Naive thymus-derived CD4-positive, alpha-beta T cell (primary cell): ENCODE measurements at regions of chr10 and their contacts with region 1.

Region 1: GRCh38 chr10:72273410-72274212 is at the start of gene DDIT4:
- DNase-seq: peak; percentile 92 to 98 (median 97)
- ATAC-seq: peak; percentile 97
- H3K4me3 ChIP-seq: peak within 1 kb of the TSS; percentile 95
- H3K4me3 Mint-ChIP-seq: peak within 1 kb of the TSS; percentile 97 to 100 (median 99)
- H3K27ac ChIP-seq: peak within 1 kb of the TSS; percentile 96
- H3K27ac Mint-ChIP-seq: peak within 1 kb of the TSS; percentile 93 to 98 (median 95)
- H3K4me1 ChIP-seq: peaks cover 9 to 20% of the 10 kb centered on the region in 2 donors
- H3K4me1 Mint-ChIP-seq: peaks cover 34 to 63% (median 59%) of the 10 kb centered on the region in 7 donors
- H3K27me3 ChIP-seq: no peaks in the 10 kb centered on the region
- H3K27me3 Mint-ChIP-seq: no peaks in the 10 kb centered on the region
- total RNA-seq, gene DDIT4: 25.4 to 335 (median 135) TPM

Region 2: DNA sequence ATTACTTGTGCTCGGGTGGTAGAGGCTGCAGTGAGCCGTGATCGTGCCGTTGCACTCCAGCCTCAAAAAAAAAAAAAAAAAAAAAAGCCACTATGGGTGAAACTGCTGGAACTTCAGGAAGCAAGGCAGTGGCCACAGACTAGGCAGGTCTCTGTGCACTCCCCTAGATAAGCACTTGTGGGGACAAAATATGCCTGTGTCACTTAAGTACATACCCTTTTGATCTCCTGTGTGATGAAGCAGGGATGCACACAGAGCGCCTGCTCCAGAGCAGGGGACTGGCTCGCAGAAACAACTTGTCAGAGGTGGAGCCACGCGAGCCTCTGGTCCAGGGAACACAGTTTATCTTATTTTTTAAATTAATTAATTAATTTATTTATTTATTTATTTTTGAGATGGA is 379.7 kb before region 1 on chr10:
- CTCF ChIA-PET with region 1: no interaction called
- POLR2A ChIA-PET with region 1: no interaction called
- intact Hi-C with region 1: loop called in 1 of 2 experiments (anchors 1 kb)
- DNase-seq: no peak
- ATAC-seq: no peak
- H3K4me3 ChIP-seq: no peak overlapping the region
- H3K4me3 Mint-ChIP-seq: no peak overlapping the region
- H3K27ac ChIP-seq: no peak overlapping the region
- H3K27ac Mint-ChIP-seq: peak overlapping the region in 1 of 9 donors; percentile 78
- H3K4me1 ChIP-seq: peaks cover 0 to 11% of the 10 kb centered on the region in 2 donors
- H3K4me1 Mint-ChIP-seq: peaks cover 5 to 22% (median 11%) of the 10 kb centered on the region in 7 donors
- H3K27me3 ChIP-seq: no peaks in the 10 kb centered on the region
- H3K27me3 Mint-ChIP-seq: peaks cover 0 to 7% (median 0%) of the 10 kb centered on the region in 5 donors

Region 3: GRCh38 chr10:72234560-72235095 is 39.0 kb before region 1 on chr10:
- CTCF ChIA-PET with region 1: interaction called, 3 read pairs
- POLR2A ChIA-PET with region 1: interaction called, 13 read pairs
- intact Hi-C with region 1: no loop called
- DNase-seq: no peak
- ATAC-seq: no peak
- H3K4me3 ChIP-seq: no peak overlapping the region
- H3K4me3 Mint-ChIP-seq: no peak overlapping the region
- H3K27ac ChIP-seq: no peak overlapping the region
- H3K27ac Mint-ChIP-seq: no peak overlapping the region
- H3K4me1 ChIP-seq: peaks cover 0 to 12% of the 10 kb centered on the region in 2 donors
- H3K4me1 Mint-ChIP-seq: peaks cover 8 to 34% (median 20%) of the 10 kb centered on the region in 7 donors
- H3K27me3 ChIP-seq: no peaks in the 10 kb centered on the region
- H3K27me3 Mint-ChIP-seq: no peaks in the 10 kb centered on the region

Region 4: GRCh38 chr10:72285972-72286521 is 12.4 kb after region 1 on chr10:
- CTCF ChIA-PET with region 1: interaction called, 33 read pairs
- POLR2A ChIA-PET with region 1: interaction called, 26 read pairs
- intact Hi-C with region 1: loop called (anchors 1 kb)
- DNase-seq: no peak
- ATAC-seq: no peak
- H3K4me3 ChIP-seq: no peak overlapping the region
- H3K4me3 Mint-ChIP-seq: peak overlapping the region in 5 of 10 donors; percentile 25 to 72 (median 63)
- H3K27ac ChIP-seq: peak overlapping the region; percentile 35
- H3K27ac Mint-ChIP-seq: peak overlapping the region; percentile 27 to 91 (median 81)
- H3K4me1 ChIP-seq: peaks cover 12 to 27% of the 10 kb centered on the region in 2 donors
- H3K4me1 Mint-ChIP-seq: peaks cover 24 to 50% (median 42%) of the 10 kb centered on the region in 7 donors
- H3K27me3 ChIP-seq: no peaks in the 10 kb centered on the region
- H3K27me3 Mint-ChIP-seq: no peaks in the 10 kb centered on the region

Region 5: GRCh38 chr10:72308320-72308987 is 34.8 kb after region 1 on chr10:
- CTCF ChIA-PET with region 1: interaction called, 21 read pairs
- POLR2A ChIA-PET with region 1: interaction called, 174 read pairs
- intact Hi-C with region 1: no loop called
- DNase-seq: peak in 2 of 9 donors; percentile 12 to 47
- ATAC-seq: peak; percentile 65
- H3K4me3 ChIP-seq: no peak overlapping the region
- H3K4me3 Mint-ChIP-seq: peak overlapping the region in 7 of 10 donors; percentile 14 to 67 (median 49)
- H3K27ac ChIP-seq: peak overlapping the region; percentile 44
- H3K27ac Mint-ChIP-seq: peak overlapping the region; percentile 62 to 89 (median 80)
- H3K4me1 ChIP-seq: peaks cover 0 to 66% of the 10 kb centered on the region in 2 donors
- H3K4me1 Mint-ChIP-seq: peaks cover 43 to 89% (median 72%) of the 10 kb centered on the region in 7 donors
- H3K27me3 ChIP-seq: no peaks in the 10 kb centered on the region
- H3K27me3 Mint-ChIP-seq: no peaks in the 10 kb centered on the region

Region 6: DNA sequence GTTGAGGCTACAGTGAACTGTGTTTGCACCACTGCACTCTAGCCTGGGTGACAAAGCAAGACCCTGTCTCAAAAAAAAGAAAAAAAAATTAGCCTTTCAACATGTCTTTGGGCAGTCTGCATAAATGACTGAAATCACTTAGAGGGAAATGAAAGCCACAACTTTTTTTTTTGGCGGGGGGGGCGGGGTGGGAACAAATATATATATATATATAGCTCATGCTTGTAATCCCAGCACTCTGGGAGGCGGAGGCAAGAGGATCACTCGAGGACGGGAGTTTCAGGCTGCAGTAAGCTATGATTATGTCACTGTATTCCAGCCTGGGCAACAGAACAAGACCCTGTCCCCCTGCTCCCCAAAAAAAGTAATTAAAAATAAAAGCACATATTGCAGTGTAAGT is 375.7 kb after region 1 on chr10:
- CTCF ChIA-PET with region 1: no interaction called
- POLR2A ChIA-PET with region 1: no interaction called
- intact Hi-C with region 1: no loop called
- DNase-seq: no peak
- ATAC-seq: no peak
- H3K4me3 ChIP-seq: no peak overlapping the region
- H3K4me3 Mint-ChIP-seq: no peak overlapping the region
- H3K27ac ChIP-seq: no peak overlapping the region
- H3K27ac Mint-ChIP-seq: no peak overlapping the region
- H3K4me1 ChIP-seq: no peaks in the 10 kb centered on the region
- H3K4me1 Mint-ChIP-seq: no peaks in the 10 kb centered on the region
- H3K27me3 ChIP-seq: no peaks in the 10 kb centered on the region
- H3K27me3 Mint-ChIP-seq: peaks cover 0 to 14% (median 0%) of the 10 kb centered on the region in 5 donors

Region 7: DNA sequence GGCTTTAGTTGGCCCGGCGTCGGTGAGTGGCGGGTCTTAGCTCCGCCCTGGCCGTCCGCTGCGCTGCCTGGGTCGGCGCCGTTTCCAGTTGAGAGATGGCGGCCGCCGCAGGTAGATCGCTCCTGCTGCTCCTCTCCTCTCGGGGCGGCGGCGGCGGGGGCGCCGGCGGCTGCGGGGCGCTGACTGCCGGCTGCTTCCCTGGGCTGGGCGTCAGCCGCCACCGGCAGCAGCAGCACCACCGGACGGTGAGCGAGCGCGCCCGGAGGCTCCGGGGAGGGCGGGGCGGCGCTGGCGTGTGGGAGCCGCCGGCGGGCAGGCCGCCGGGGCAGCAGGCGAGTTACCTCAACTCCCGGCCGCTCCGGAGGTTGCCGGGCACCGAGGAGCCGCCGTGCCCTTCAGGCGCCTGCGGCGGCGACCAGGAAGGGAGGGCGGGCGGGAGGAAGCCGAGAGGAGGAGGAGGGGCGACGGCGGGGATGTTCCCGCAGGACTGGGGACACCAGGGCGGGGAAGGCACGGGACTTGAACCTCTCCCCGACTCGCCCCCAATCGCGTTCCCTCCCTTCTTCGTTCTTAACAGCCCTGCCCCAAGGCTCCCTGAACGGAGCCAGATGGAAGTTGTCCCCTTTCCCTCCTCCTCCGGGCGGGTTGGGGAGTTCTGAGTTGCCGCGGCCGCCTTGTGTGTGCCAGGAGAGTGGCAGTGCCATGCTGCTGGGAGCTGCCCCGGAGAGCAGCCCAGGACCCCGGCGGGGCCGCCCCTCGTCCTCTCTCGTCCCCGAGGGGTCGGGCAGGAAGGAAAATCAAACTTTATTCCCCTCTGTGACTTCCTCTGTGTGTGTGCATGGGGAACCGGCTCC is 418.7 kb after region 1 on chr10 and contains the start of gene MCU:
- CTCF ChIA-PET with region 1: no interaction called
- POLR2A ChIA-PET with region 1: no interaction called
- intact Hi-C with region 1: loop called in 1 of 2 experiments (anchors 5 kb)
- DNase-seq: peak; percentile 85 to 94 (median 91)
- ATAC-seq: peak; percentile 98
- H3K4me3 ChIP-seq: peak within 1 kb of the TSS; percentile 86
- H3K4me3 Mint-ChIP-seq: peak within 1 kb of the TSS; percentile 84 to 93 (median 91)
- H3K27ac ChIP-seq: peak within 1 kb of the TSS; percentile 68
- H3K27ac Mint-ChIP-seq: peak within 1 kb of the TSS; percentile 5 to 93 (median 76)
- H3K4me1 ChIP-seq: peaks cover 11 to 12% of the 10 kb centered on the region in 2 donors
- H3K4me1 Mint-ChIP-seq: peaks cover 9 to 39% (median 32%) of the 10 kb centered on the region in 7 donors
- H3K27me3 ChIP-seq: no peaks in the 10 kb centered on the region
- H3K27me3 Mint-ChIP-seq: peaks cover 0 to 6% (median 0%) of the 10 kb centered on the region in 5 donors
- total RNA-seq, gene MCU: 7.7 to 14.3 (median 12.7) TPM

Region 8: DNA sequence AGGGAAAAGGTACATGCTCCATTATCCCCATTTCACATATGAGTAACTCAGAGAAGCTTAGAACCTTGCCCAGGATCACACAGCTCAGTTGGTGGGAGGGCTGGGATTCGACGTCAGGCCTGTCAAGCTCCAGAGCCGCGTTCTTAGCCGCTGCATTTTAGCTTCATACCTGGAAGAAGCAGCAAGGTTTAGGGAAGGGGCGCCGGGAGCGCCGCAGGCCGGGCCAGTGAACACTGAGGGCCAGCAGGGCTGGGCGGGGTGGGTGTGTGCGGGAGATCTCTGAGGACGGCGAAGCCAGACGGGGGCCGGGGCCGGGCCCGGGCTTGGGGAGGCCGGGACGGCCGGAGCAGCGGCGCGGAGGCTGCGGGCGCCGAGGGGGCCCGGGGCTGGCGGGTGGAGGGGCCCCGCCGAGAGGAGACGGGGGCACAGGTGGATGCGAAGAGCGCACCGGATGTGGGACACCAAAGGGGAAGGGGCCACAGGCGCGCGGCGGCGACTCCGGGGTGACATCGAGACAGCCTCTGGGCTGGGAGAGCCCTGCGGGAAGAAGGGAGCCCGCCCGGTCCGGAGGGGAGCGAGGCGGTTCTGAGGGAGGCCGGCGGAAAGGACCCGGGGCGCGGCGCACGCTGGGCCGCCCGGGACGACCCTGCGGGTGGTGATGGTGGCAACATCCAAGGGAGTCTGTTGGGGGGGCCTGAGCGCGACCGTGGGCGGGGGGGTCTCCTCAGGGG is 1537.3 kb after region 1 on chr10:
- CTCF ChIA-PET with region 1: no interaction called
- POLR2A ChIA-PET with region 1: no interaction called
- intact Hi-C with region 1: no loop called
- DNase-seq: peak; percentile 46 to 76 (median 71)
- ATAC-seq: peak; percentile 18
- H3K4me3 ChIP-seq: peak overlapping the region; percentile 69
- H3K4me3 Mint-ChIP-seq: peak overlapping the region; percentile 88 to 97 (median 94)
- H3K27ac ChIP-seq: peak overlapping the region; percentile 97
- H3K27ac Mint-ChIP-seq: peak overlapping the region; percentile 94 to 98 (median 96)
- H3K4me1 ChIP-seq: peaks cover 26 to 31% of the 10 kb centered on the region in 2 donors
- H3K4me1 Mint-ChIP-seq: peaks cover 31 to 54% (median 49%) of the 10 kb centered on the region in 7 donors
- H3K27me3 ChIP-seq: no peaks in the 10 kb centered on the region
- H3K27me3 Mint-ChIP-seq: no peaks in the 10 kb centered on the region